Mammary epithelial cell (primary cell): ENCODE measurements at regions of chr1 and their contacts with region 1.

Region 1: GRCh38 chr1:167220537-167221125 is at the start of gene POU2F1:
- DNase-seq: peak; percentile 97
- H3K4me3 ChIP-seq: peak within 1 kb of the TSS; percentile 88 to 90 (median 90)
- H3K27ac ChIP-seq: peak within 1 kb of the TSS; percentile 91
- H3K4me1 ChIP-seq: peaks cover 12% of the 10 kb centered on the region
- H3K27me3 ChIP-seq: no peaks in the 10 kb centered on the region
- CTCF ChIP-seq: peak; percentile 25 to 79
- total RNA-seq, gene POU2F1: 10.2 to 14.4 TPM

Region 2: DNA sequence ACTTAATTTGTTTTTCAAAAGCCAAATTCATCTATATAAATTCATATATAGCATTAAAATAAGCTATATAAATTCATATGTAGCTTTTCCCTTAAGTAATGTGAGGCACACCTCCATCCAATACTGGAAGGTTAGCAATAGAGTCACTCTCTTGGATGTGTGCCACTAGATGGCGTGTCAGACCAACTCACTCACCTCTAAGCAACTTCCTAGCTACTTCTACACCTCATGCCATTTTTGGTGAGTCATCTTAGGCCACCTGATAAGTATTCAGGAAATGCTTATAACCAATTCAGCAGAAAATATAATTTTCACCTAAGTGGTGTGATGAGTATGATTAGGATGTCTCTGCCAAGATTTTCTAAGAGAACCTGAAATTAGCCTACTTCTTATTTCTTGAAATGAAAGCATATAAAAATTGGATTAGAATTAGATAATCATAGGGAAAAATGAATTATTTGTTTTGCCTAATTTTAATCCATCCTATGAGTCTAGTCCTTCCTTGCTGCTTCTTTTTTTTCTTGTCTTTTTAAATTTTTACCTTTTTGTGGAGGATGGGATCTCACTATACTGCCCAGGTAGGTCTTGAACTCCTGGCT is 310.1 kb before region 1 on chr1:
- CTCF ChIA-PET with region 1: interaction called, 10 read pairs
- dilution Hi-C with region 1: no loop called
- in situ Hi-C with region 1: no loop called
- intact Hi-C with region 1: no loop called
- DNase-seq: peak; percentile 87
- H3K4me3 ChIP-seq: no peak overlapping the region
- H3K27ac ChIP-seq: no peak overlapping the region
- H3K4me1 ChIP-seq: peaks cover 3% of the 10 kb centered on the region
- H3K27me3 ChIP-seq: no peaks in the 10 kb centered on the region
- CTCF ChIP-seq: peak; percentile 69 to 78

Region 3: GRCh38 chr1:167095368-167095767 is 125.3 kb before region 1 on chr1:
- CTCF ChIA-PET with region 1: interaction called, 35 read pairs
- dilution Hi-C with region 1: no loop called
- in situ Hi-C with region 1: no loop called
- intact Hi-C with region 1: no loop called
- DNase-seq: peak; percentile 84
- H3K4me3 ChIP-seq: no peak overlapping the region
- H3K27ac ChIP-seq: no peak overlapping the region
- H3K4me1 ChIP-seq: peaks cover 19% of the 10 kb centered on the region
- H3K27me3 ChIP-seq: no peaks in the 10 kb centered on the region
- CTCF ChIP-seq: no peak

Region 4: DNA sequence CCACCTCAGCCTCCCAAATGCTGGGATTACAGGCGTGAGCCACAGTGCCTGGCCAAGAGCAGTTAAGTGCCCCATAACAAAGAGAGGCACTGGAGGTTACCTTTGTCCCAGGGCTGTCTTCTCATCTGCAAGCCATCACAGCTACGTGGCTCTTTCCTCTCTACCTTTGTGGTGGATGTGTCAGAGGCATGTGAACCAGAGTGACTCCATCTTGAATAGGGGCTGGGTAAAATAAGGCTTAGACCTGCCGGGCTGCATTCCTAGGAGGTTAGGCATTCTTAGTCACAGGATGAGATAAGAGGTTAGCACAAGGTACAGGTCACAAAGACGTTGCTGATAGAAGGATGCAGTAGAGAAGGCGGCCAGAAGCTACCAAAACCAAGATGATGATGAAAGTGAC is 59.4 kb before region 1 on chr1:
- CTCF ChIA-PET with region 1: interaction called, 3 read pairs
- dilution Hi-C with region 1: no loop called
- in situ Hi-C with region 1: no loop called
- intact Hi-C with region 1: loop called (anchors 1 kb)
- DNase-seq: peak; percentile 92
- H3K4me3 ChIP-seq: no peak overlapping the region
- H3K27ac ChIP-seq: peak overlapping the region; percentile 17
- H3K4me1 ChIP-seq: peaks cover 39% of the 10 kb centered on the region
- H3K27me3 ChIP-seq: no peaks in the 10 kb centered on the region
- CTCF ChIP-seq: no peak

Region 5: GRCh38 chr1:167258858-167259257 is 38.2 kb after region 1 on chr1:
- CTCF ChIA-PET with region 1: no interaction called
- dilution Hi-C with region 1: no loop called
- in situ Hi-C with region 1: no loop called
- intact Hi-C with region 1: no loop called
- DNase-seq: no peak
- H3K4me3 ChIP-seq: no peak overlapping the region
- H3K27ac ChIP-seq: no peak overlapping the region
- H3K4me1 ChIP-seq: no peaks in the 10 kb centered on the region
- H3K27me3 ChIP-seq: no peaks in the 10 kb centered on the region
- CTCF ChIP-seq: no peak

Region 6: GRCh38 chr1:167442124-167442848 is 221.7 kb after region 1 on chr1:
- CTCF ChIA-PET with region 1: no interaction called
- dilution Hi-C with region 1: no loop called
- in situ Hi-C with region 1: no loop called
- intact Hi-C with region 1: loop called (anchors 2 kb)
- DNase-seq: peak; percentile 73
- H3K4me3 ChIP-seq: no peak overlapping the region
- H3K27ac ChIP-seq: no peak overlapping the region
- H3K4me1 ChIP-seq: peaks cover 6% of the 10 kb centered on the region
- H3K27me3 ChIP-seq: no peaks in the 10 kb centered on the region
- CTCF ChIP-seq: peak; percentile 92

Region 7: DNA sequence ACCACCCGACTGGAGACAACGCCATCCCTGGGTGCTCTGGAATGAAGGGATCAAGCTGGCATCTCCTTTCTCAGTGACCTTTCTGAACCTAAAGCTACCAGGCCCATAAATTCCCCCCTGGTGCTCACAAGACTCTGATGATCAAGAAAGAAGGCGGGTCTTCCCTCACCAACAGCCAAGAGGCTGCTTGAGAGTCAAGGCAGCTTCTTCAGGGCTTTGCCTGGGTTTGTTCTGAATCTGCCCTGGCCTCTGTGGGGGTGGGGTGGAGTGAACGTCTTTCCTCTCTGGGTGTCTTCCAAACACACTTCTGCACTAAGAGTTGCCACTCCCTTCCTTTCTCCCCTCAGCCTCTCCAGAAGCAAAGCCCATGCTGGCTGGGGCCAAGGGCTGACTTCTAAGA is 261.6 kb after region 1 on chr1:
- CTCF ChIA-PET with region 1: no interaction called
- dilution Hi-C with region 1: no loop called
- in situ Hi-C with region 1: no loop called
- intact Hi-C with region 1: no loop called
- DNase-seq: no peak
- H3K4me3 ChIP-seq: no peak overlapping the region
- H3K27ac ChIP-seq: no peak overlapping the region
- H3K4me1 ChIP-seq: no peaks in the 10 kb centered on the region
- H3K27me3 ChIP-seq: no peaks in the 10 kb centered on the region
- CTCF ChIP-seq: no peak

Region 8: DNA sequence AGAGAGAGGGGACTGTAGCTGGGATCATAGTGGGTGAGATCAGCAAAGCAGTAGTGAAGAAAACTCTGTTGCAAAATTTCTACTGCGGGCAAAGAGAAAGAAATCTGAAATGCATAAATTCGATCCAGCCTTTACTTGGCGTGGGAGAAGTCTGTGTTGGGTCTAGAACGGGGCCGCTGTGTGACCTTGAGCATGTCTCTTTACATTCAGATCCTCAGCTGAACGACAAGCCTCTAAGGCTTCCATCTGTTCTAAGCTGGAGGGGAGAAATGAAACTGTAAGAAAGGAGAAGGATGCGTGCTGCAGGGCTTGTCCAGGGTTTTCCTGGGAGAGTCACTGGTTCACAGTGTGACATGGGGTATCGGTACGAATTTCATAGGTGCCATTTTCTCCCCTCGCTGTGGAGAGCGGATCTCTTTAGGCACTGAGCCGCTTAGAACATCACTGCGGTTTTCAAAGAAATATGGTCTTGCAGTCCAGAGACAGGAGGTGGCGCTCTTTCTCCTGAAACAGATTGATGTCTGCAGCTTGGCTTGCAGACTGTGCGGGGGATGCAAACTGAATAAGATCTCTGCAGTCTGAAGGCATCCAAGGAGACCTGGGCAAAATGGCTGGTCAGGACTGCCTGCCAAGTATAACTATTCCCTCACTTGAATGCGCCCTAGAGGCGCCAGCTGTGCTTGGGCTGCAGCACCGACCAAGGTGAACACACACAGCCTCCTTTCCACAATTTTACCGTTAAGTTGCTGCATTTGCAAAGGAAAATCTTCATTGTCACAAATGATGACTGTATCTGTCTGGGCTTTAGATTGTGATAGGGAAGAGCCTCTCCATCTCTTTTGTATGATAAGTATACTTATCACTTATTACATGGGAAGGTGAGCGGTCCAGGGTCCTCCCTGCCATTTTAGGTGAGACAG is 1219.1 kb after region 1 on chr1:
- CTCF ChIA-PET with region 1: interaction called, 11 read pairs
- dilution Hi-C with region 1: no loop called
- in situ Hi-C with region 1: no loop called
- intact Hi-C with region 1: no loop called
- DNase-seq: peak; percentile 74
- H3K4me3 ChIP-seq: no peak overlapping the region
- H3K27ac ChIP-seq: no peak overlapping the region
- H3K4me1 ChIP-seq: peaks cover 9% of the 10 kb centered on the region
- H3K27me3 ChIP-seq: no peaks in the 10 kb centered on the region
- CTCF ChIP-seq: peak; percentile 84 to 85

Region 9: DNA sequence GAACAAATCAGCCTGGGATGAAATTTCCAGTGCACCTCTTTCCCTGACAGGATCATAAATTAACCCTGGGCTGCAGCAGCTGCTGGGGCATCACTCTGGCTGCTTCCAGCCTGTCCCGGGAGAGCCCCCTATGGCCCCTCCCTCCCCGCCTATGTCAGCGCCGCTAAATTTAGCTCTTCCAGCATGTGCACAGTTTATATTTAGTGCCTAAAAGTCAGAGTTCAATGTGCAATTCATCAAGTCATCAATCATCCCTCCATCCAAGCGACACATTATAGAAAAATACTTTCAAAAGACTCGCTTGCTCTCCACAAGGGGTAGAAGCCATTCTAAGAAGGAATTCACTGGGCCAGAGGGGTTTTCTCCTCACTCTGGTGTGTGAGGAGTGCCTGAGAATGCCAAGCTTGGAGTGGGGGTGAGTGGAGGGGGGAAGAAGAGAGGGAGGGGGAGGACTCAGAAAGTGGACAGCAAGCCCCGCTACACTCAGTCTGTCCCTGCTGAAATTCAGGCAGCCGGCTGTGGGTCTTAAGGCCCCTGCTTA is 1393.1 kb after region 1 on chr1:
- CTCF ChIA-PET with region 1: no interaction called
- dilution Hi-C with region 1: no loop called
- in situ Hi-C with region 1: no loop called
- intact Hi-C with region 1: no loop called
- DNase-seq: no peak
- H3K4me3 ChIP-seq: no peak overlapping the region
- H3K27ac ChIP-seq: no peak overlapping the region
- H3K4me1 ChIP-seq: peaks cover 6% of the 10 kb centered on the region
- H3K27me3 ChIP-seq: no peaks in the 10 kb centered on the region
- CTCF ChIP-seq: no peak